ENCODE measurements at regions of chr6 and their contacts with region 1.

Region 1: DNA sequence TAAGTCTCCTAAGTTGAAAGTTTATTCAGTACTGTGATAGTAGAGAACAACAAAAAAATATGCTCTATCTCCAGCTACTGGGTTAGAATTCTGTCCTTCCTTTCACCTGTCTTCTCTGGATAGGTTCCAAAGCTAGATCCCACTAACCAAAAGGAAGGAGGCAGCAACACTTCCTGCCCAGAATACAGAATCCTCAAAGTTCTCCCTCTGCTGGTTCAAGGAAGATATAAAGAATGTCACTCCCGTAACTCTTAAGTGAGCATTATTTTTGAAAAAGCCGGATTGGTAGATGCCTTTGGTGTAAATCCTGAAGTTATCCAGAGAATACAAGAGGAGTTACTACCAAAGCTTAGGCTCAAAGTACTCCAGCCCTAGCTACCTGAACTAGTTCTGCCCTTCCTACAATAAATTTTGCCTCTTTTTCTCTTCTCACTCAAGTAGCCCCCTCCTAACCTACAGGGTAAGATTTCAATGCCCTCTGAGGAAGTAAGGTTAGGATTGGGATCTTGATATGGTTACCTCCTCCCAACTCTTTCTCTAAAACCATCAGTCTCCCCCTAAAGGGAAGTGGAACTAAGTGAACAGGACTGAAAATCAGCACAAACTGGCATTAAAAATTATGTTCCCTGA is 26.0 kb upstream of the CRIP3 start:
- DNase-seq: peak; percentile 78
- H3K4me3 ChIP-seq: no peak overlapping the region
- H3K27ac ChIP-seq: no peak overlapping the region
- H3K4me1 ChIP-seq: no peaks in the 10 kb centered on the region
- H3K27me3 ChIP-seq: no peaks in the 10 kb centered on the region
- CTCF ChIP-seq: peak; percentile 69

Region 2: GRCh38 chr6:43263314-43264178 is 71.0 kb before region 1 on chr6:
- CTCF ChIA-PET with region 1: interaction called, 6 read pairs
- POLR2A ChIA-PET with region 1: no interaction called
- intact Hi-C with region 1: loop called (anchors 5 kb)
- DNase-seq: peak; percentile 75
- H3K4me3 ChIP-seq: no peak overlapping the region
- H3K27ac ChIP-seq: no peak overlapping the region
- H3K4me1 ChIP-seq: no peaks in the 10 kb centered on the region
- H3K27me3 ChIP-seq: no peaks in the 10 kb centered on the region
- CTCF ChIP-seq: peak; percentile 80

Region 3: GRCh38 chr6:43883847-43884651 is 549.5 kb after region 1 on chr6:
- CTCF ChIA-PET with region 1: no interaction called
- POLR2A ChIA-PET with region 1: no interaction called
- intact Hi-C with region 1: no loop called
- DNase-seq: no peak
- H3K4me3 ChIP-seq: no peak overlapping the region
- H3K27ac ChIP-seq: no peak overlapping the region
- H3K4me1 ChIP-seq: peaks cover 9% of the 10 kb centered on the region
- H3K27me3 ChIP-seq: no peaks in the 10 kb centered on the region
- CTCF ChIP-seq: no peak

Measured in A673 (cell line).